H1 (cell line): ENCODE measurements at regions of chr19 and their contacts with region 1.

Region 1: DNA sequence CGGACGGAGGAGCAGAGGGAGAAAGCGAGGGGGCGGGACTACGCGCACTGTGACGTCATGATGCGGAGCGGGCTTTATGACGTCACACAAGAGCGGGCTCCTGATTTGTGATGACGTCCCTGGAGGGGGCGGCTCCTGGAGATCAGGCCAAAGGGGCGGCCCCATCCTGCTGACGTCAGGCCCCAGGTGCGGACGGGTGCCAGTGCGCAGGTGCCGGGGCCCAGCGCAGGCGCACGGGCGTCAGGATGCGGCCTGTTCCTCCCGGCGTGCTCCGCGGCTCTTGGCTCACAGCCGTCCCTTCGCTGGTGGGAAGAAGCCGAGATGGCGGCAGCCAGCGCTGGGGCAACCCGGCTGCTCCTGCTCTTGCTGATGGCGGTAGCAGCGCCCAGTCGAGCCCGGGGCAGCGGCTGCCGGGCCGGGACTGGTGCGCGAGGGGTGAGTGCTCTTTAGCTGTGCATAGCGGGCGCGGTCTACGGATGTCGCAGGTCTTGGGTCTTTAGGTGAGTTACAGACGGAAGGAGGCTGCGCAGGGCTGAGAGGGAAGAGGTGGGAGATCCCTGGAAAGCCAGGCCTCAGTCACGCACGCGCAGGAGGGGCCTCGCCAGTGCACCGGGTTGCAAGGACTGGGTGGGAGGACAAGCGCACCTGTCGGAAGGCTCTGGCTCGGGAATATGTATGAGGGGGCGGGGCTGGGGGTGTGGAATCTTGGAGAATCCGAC is at the starts of genes EMC10 and GARIN5A:
- DNase-seq: peak; percentile 93 to 98
- H3K4me3 ChIP-seq: peak within 1 kb of the TSS; percentile 79 to 92 (median 85)
- H3K27ac ChIP-seq: peak within 1 kb of the TSS; percentile 86
- H3K4me1 ChIP-seq: no peaks in the 10 kb centered on the region
- H3K27me3 ChIP-seq: no peaks in the 10 kb centered on the region; a peak in 1 of 7 replicates
- CTCF ChIP-seq: peak in 1 of 3 experiments; percentile 5; a peak in 1 of 4 replicates
- EP300 ChIP-seq: no peak
- POLR2A ChIP-seq: peak in 1 of 2 experiments; percentile 92; a peak in 2 of 3 replicates
- RAD21 ChIP-seq: no peak
- total RNA-seq, gene EMC10: 103 and 105 TPM in 2 replicates
- total RNA-seq, gene GARIN5A: 8.1 and 9.1 TPM in 2 replicates

Region 2: DNA sequence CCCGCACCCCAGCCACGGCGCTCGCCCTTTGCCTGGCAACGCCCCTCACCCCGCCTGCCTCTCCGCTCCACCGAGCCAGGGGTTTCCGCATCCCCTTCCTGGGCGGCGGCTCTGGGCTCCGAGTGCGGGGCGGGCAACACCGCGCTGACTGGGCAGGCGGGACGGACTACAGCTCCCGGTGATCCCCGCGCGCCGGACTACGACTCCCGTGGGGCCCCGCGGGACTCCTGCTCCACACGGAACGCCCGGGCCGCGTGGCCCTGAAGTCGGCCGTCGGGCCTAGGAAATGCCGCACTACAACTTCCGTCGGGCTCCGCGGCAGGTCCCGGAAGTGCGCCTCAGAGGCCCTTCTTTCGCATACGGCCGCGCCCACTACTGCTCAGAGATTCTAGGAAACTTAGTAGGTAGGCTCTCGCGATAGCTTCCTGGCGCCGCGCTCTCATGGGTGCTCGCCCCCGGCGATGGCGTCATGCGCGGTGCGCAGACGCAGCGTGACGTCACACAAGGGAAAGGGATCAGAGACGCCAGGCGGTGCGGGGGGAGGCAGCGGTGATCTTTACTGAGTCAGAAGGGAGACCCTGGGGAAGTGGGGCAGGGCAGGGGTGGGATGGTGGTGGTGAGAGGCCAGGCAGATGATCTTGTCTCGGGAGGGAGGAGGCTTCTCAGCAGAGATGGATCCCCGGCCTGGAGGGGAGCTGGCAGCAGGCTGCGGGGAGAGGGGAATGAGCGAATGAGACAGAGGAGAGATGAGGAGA is 34.9 kb after region 1 on chr19 and contains the start of gene JOSD2:
- CTCF ChIA-PET with region 1: interaction called, 13 read pairs
- POLR2A ChIA-PET with region 1: interaction called, 3 read pairs
- DNase-seq: peak; percentile 91 to 94
- H3K4me3 ChIP-seq: peak within 1 kb of the TSS; percentile 42 to 62 (median 56)
- H3K27ac ChIP-seq: peak within 1 kb of the TSS; percentile 32; the same call in 1 of the 2 replicates
- H3K4me1 ChIP-seq: peaks cover 0 to 6% (median 4%) of the 10 kb centered on the region in 4 experiments; a peak in 4 of 7 replicates
- H3K27me3 ChIP-seq: peaks cover 0 to 26% (median 15%) of the 10 kb centered on the region in 4 experiments; a peak in 6 of 7 replicates
- CTCF ChIP-seq: no peak; a peak in 1 of 4 replicates
- EP300 ChIP-seq: no peak
- POLR2A ChIP-seq: no peak
- RAD21 ChIP-seq: no peak
- total RNA-seq, gene JOSD2: 1.9 and 3.6 TPM in 2 replicates